CD8-positive, alpha-beta T cell (primary cell): ENCODE measurements at regions of chr4 and their contacts with region 1.

Region 1: DNA sequence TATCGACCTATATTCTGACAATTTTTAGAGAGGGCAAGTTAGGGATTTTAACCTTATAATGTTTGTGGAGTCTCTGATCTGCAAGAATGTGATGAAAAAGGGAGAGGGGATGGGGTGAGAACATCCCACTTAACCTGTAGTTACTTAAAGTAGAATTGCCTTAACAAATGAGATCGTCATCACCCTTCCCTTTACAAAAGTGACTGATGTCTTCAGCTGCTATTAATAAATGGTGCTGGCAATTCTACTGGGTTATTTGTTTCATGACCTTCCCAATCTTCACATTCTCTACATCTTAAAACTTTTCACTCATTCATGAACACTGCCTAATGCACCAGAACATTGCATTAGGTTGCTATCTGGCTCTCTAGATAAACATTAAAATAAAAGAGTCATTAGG is 873.4 kb upstream of the LCORL start:
- DNase-seq: no peak
- ATAC-seq: no peak
- H3K4me3 ChIP-seq: no peak overlapping the region
- H3K4me3 Mint-ChIP-seq: no peak overlapping the region
- H3K27ac ChIP-seq: no peak overlapping the region
- H3K27ac Mint-ChIP-seq: no peak overlapping the region
- H3K4me1 ChIP-seq: no peaks in the 10 kb centered on the region
- H3K4me1 Mint-ChIP-seq: no peaks in the 10 kb centered on the region
- H3K27me3 ChIP-seq: no peaks in the 10 kb centered on the region
- H3K27me3 Mint-ChIP-seq: no peaks in the 10 kb centered on the region
- CTCF ChIP-seq: no peak

Region 2: GRCh38 chr4:18798123-18798522 is 96.8 kb before region 1 on chr4:
- CTCF ChIA-PET with region 1: no interaction called
- POLR2A ChIA-PET with region 1: no interaction called
- intact Hi-C with region 1: no loop called
- DNase-seq: no peak
- ATAC-seq: no peak
- H3K4me3 ChIP-seq: no peak overlapping the region
- H3K4me3 Mint-ChIP-seq: no peak overlapping the region
- H3K27ac ChIP-seq: no peak overlapping the region
- H3K27ac Mint-ChIP-seq: no peak overlapping the region
- H3K4me1 ChIP-seq: no peaks in the 10 kb centered on the region
- H3K4me1 Mint-ChIP-seq: no peaks in the 10 kb centered on the region
- H3K27me3 ChIP-seq: no peaks in the 10 kb centered on the region
- H3K27me3 Mint-ChIP-seq: no peaks in the 10 kb centered on the region
- CTCF ChIP-seq: no peak

Region 3: DNA sequence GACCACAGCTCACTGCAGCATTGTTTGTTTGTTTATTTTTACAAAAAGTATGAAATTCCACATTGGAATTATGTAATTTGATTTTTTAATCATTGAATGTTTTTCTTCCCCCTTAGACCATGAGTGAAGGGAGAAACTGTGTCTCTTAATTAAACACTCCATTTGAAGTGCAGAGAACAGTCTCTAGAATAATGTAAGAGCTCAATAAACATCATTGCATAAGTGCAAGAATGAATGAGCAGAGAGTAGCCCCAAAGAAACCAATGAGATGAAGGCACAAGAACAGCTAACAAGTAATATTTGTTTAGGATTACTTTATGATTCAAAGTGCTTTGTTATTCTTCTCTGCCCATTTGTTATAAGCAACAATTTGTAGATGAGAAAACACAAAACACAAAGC is 47.9 kb after region 1 on chr4:
- CTCF ChIA-PET with region 1: no interaction called
- POLR2A ChIA-PET with region 1: no interaction called
- intact Hi-C with region 1: loop called in 1 of 2 experiments (anchors 1 kb)
- DNase-seq: no peak
- ATAC-seq: no peak
- H3K4me3 ChIP-seq: no peak overlapping the region
- H3K4me3 Mint-ChIP-seq: no peak overlapping the region
- H3K27ac ChIP-seq: no peak overlapping the region
- H3K27ac Mint-ChIP-seq: no peak overlapping the region
- H3K4me1 ChIP-seq: no peaks in the 10 kb centered on the region
- H3K4me1 Mint-ChIP-seq: no peaks in the 10 kb centered on the region
- H3K27me3 ChIP-seq: no peaks in the 10 kb centered on the region
- H3K27me3 Mint-ChIP-seq: no peaks in the 10 kb centered on the region
- CTCF ChIP-seq: no peak